BJ (cell line): ENCODE measurements at regions of chr3 and their contacts with region 1.

Region 1: DNA sequence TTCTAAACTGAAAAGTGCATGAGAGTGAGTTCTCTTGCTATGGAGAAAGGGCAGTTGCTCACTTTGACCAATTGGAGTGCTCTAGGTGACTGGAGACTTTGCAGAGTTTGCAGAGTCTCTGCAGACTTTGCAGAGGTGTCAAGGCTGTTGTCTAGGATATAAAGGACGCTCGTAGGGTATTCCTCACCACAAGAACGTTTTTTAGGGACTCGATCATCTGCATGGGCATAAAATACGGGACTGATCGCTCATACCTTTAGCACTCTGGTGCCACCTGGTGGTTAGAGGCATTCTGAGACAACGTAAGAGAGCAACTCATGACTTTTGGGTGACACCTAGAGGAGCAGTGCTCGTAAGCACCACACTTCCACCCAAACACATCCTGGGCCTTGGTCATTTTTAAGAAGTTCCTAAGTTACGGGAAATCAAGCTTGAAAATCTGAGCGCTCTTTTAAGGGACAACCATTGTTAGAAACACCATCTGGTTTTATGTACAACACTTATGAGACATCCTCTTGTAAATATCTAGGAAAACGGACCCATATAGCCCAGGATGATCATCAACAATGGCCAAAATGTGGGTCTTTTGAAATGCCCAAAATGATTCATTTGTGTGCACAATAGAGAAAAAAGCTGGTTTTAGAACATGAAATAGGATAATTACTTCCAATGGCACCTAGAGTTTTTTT is 51.6 kb upstream of the XCR1 start:
- DNase-seq: peak; percentile 48
- H3K4me3 ChIP-seq: no peak overlapping the region
- H3K27me3 ChIP-seq: peaks cover 2% of the 10 kb centered on the region; the same call in 1 of the 2 replicates
- CTCF ChIP-seq: peak; percentile 95

Region 2: GRCh38 chr3:45760878-45761711 is 317.8 kb before region 1 on chr3:
- CTCF ChIA-PET with region 1: interaction called, 67 read pairs
- POLR2A ChIA-PET with region 1: no interaction called
- DNase-seq: peak; percentile 3
- H3K4me3 ChIP-seq: no peak overlapping the region
- H3K27me3 ChIP-seq: peaks cover 9% of the 10 kb centered on the region
- CTCF ChIP-seq: peak; percentile 88

Region 3: DNA sequence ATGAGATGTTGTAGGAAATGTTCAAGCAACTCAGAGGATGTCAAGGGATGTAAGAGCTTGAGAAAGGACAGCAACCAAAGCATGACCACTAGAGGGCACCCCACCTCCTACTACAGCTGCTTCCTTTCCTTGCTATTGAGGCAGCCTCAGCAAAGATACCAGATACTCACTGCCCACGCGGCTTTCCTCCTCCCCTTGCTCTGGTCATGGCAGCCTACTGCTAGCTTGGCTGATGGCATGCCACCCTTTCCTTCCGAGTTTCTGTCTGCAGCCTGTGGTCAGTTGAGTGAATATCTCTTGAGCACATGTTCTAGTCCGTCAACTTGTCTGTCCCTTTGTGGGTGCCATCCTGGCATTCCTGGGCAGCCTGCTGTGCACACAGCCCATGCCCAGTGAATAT is 140.0 kb before region 1 on chr3:
- CTCF ChIA-PET with region 1: interaction called, 541 read pairs
- POLR2A ChIA-PET with region 1: no interaction called
- DNase-seq: no peak
- H3K4me3 ChIP-seq: no peak overlapping the region
- H3K27me3 ChIP-seq: no peaks in the 10 kb centered on the region
- CTCF ChIP-seq: peak; percentile 89

Region 4: GRCh38 chr3:46065294-46065721 is 13.5 kb before region 1 on chr3:
- CTCF ChIA-PET with region 1: interaction called, 28 read pairs
- POLR2A ChIA-PET with region 1: no interaction called
- DNase-seq: no peak
- H3K4me3 ChIP-seq: no peak overlapping the region
- H3K27me3 ChIP-seq: peaks cover 14% of the 10 kb centered on the region
- CTCF ChIP-seq: no peak

Region 5: DNA sequence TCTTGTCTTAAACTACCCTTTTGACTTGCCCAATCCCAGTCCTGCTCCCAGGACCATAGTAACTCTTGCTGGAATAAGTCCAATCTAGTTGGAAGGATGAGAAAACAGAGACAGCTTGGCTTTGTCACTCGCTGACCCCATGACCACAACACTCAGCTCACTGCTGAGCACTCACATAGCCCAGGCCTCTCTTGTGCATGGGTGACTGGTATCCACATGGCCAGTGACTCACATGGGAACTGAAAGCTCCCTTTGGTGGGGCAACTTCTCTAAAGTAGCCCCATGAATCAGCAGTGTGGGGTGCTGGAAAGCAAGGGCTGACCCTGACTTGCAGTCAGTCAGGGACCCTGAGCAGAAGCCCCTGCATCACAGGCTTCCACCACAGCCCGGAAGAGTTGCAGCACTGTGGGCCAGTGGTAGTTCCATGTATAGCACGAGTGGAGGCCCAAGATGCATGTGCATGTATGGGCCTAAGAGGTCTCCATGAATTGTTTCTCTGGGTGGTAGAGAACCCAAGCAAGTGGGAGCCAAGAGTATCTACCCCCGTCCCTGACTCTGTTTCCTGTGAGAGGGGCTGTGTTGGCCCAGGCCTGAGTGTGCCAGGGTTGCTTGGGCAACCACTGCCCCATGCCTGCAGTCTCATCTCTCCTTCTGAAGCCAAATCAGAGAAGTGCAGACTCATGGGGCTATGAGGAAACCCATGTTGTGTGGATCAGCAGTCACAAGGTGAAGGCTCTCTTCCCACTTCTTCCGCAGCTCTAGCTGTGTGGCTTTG is 10.6 kb after region 1 on chr3:
- CTCF ChIA-PET with region 1: interaction called, 31 read pairs
- POLR2A ChIA-PET with region 1: no interaction called
- DNase-seq: peak; percentile 52
- H3K4me3 ChIP-seq: no peak overlapping the region
- H3K27me3 ChIP-seq: no peaks in the 10 kb centered on the region
- CTCF ChIP-seq: no peak

Region 6: GRCh38 chr3:46098319-46098761 is 19.5 kb after region 1 on chr3:
- CTCF ChIA-PET with region 1: interaction called, 10 read pairs
- POLR2A ChIA-PET with region 1: no interaction called
- DNase-seq: no peak
- H3K4me3 ChIP-seq: no peak overlapping the region
- H3K27me3 ChIP-seq: no peaks in the 10 kb centered on the region
- CTCF ChIP-seq: no peak

Region 7: DNA sequence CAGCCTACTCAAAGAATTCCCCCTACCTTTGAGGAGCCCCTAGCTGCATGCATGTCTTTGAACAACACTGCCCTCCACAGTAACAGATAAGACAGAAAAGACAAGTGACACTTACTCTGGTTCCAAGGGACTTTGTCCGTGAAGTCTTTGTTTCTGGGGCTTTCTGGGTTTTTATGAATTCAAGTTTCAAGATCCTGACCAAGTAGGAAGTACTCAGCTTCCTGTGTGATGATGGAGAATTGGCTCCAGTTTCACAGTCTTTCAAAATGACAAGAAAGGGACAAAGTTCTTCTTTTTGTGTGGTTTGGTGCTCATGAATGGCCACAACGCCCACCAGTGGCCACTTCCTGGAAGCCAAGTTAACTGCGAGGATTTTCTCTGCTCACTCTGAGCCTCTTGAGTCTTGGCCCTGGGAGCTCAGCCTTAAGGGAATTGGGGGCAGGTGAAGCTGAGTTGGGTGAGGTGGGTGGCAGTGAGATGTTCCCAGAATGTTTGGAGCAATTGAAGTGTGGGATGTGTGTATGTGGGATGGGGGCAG is 129.4 kb after region 1 on chr3 and contains the start of gene CCR1:
- CTCF ChIA-PET with region 1: interaction called, 33 read pairs
- POLR2A ChIA-PET with region 1: no interaction called
- DNase-seq: no peak
- H3K4me3 ChIP-seq: no peak within 1 kb of the TSS
- H3K27me3 ChIP-seq: peaks cover 2% of the 10 kb centered on the region; the same call in 1 of the 2 replicates
- CTCF ChIP-seq: peak; percentile 68
- polyA plus RNA-seq, gene CCR1: not detected in 2 replicates

Region 8: DNA sequence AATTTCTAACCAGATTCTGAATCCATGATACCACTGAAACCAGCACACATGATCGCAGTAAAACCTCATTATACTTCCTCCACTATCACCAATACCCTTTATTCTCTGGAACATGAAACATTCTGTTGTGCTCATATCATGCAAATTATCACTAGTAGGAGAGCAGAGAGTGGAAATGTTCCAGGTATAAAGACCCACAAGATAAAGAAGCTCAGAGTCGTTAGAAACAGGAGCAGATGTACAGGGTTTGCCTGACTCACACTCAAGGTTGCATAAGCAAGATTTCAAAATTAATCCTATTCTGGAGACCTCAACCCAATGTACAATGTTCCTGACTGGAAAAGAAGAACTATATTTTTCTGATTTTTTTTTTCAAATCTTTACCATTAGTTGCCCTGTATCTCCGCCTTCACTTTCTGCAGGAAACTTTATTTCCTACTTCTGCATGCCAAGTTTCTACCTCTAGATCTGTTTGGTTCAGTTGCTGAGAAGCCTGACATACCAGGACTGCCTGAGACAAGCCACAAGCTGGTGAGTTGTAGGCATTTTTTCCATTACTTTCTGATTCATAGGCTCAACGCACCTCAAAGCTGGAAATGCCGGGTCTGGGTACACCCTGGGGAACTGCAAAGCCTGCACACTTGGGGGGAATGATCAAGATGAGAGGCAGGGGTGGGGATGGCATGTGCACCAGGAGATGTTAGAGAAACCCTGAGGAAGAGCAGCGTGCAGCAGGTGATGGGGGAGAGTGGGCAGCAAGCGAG is 275.0 kb after region 1 on chr3 and contains the start of gene CCR2:
- CTCF ChIA-PET with region 1: no interaction called
- POLR2A ChIA-PET with region 1: no interaction called
- DNase-seq: no peak
- H3K4me3 ChIP-seq: no peak within 1 kb of the TSS
- H3K27me3 ChIP-seq: peaks cover 5% of the 10 kb centered on the region
- CTCF ChIP-seq: no peak
- polyA plus RNA-seq, gene CCR2: not detected in 2 replicates